Right ventricle myocardium inferior (tissue), 1 donor: ENCODE measurements at regions of chrX and their contacts with region 1.

Region 1: DNA sequence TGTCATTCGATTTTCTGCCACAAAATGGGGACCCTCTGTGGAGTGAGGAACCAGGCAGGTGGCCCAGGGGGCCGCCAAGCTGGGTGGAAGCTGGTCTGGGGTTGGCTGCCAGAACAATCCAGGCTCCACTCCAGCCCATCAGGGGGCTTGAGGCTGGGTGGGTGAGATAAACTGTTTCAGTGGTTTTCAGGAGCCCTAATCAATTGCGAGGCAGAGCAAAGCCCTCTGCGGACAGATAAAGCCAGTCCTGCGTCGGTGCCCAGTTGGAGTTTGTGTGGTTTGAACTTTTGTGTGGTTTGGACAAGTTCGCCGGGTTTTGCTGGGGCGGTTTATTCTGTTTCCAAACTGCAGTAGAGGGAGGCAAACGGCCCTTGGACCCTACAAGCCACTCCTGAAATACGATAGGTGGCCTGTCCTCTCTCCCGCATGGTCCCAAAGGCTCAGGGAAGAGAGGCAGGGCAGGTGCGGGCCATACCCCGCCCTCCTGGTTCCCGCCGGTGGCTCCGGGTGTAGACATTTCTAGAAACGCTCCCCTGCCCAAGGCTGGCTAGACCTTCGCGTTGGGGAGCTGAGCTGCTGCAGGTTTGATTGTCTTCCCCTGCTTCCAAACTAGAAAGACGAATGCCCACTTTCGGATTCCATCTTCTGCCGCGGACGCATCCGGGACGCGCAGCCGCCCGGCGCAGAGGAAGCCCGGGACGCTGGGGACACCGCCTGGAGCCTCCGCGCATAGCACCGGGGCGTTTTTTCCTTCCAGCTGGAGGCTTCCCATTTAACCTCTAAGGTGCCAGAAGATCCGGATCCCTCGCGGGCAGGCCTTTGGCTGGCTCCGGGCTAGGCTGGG is 169.0 kb upstream of the BCOR start:
- DNase-seq: peak; percentile 80
- ATAC-seq: peak; percentile 85

Region 2: GRCh38 chrX:39730662-39731397 is 535.9 kb before region 1 on chrX:
- intact Hi-C with region 1: loop called (anchors 5 kb)
- DNase-seq: peak; percentile 70
- ATAC-seq: peak; percentile 82

Region 3: DNA sequence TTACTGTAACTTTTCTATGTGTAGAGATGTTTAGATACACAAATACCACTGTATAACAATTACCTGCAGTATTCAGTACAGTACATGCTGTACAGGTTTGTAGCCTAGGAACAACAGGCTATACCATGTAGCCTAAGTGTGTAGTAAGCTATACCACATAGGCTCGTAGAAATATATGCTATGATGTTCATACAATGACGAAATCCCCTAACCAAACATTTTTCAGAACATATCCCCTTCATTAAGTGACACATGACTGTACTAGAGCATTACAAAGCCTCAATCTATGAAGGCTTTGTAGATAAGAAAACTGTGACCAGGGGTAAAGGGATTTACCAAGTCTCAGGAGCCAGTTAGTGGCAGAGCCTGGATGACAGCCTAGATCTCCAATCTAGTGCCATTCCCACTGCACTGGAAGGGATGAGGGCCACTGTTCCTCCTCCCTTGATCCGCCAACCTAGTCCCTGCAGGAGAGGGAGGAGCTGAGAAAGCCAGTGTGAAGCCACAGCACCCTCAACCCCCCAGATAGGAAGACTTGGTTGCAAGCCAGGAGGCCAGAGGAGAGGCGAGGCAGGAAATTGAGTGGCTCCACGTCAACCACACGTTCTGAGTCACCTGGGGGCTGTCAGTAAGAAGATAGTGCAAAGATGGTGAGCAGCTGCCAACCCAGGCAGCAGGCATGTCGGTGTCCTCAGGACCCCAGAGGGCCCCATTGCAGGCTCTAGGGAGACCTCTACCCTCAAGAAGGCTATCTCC is 396.7 kb before region 1 on chrX:
- intact Hi-C with region 1: no loop called
- DNase-seq: no peak
- ATAC-seq: no peak

Region 4: DNA sequence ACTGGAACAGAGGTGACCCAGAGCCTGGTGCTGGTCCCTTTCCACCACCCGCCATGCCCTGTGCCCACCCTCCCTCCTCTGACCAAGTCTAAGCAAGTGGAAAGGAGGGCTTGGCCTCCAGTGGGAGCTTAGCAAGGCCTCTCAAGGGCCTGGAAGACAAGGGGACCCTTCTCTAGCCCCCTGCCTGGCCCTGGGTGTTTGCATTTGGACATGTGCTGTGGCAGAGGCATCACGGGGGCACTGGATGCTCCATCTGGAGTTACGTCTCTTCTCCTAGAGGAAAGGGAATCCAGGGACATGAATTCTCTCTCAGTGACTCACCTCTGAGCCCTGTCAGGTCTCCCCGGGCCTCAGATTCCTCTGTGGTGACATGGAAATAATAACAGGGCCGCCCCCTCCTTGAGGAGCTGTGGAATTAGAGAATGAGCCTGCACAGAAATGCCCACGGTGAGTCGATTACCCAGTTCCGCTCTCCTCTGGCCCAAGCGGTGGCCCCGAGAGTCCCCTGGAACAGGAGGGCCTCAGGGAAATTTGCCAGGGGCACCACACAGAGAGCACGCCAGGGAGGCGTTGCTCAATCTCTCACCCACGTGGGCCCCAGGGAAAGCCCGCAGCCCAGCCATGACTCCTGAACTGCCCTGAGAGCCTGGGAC is 358.6 kb before region 1 on chrX:
- intact Hi-C with region 1: loop called (anchors 10 kb)
- DNase-seq: no peak
- ATAC-seq: peak; percentile 87

Region 5: GRCh38 chrX:40097497-40098263 is 169.0 kb before region 1 on chrX and contains the start of gene BCOR:
- intact Hi-C with region 1: loop called (anchors 5 kb)
- DNase-seq: peak; percentile 83
- ATAC-seq: peak; percentile 67
- total RNA-seq, gene BCOR: 16.9 TPM

Region 6: GRCh38 chrX:40175511-40176350 is 91.0 kb before region 1 on chrX:
- intact Hi-C with region 1: loop called (anchors 5 kb)
- DNase-seq: peak; percentile 90
- ATAC-seq: peak; percentile 65